Activated CD8-positive, alpha-beta T cell treated with anti-CD3 and anti-CD28 coated beads, Interleukin-2, amount 10 ng/mL, durations not matched to agents 7 days and 5 days (primary cell): ENCODE measurements at regions of chr3 and their contacts with region 1.

Region 1: GRCh38 chr3:111967651-111968274 is 11.1 kb upstream of the ABHD10 start:
- DNase-seq: peak; percentile 87
- ATAC-seq: peak; percentile 85
- H3K4me3 Mint-ChIP-seq: no peak overlapping the region
- H3K27ac Mint-ChIP-seq: no peak overlapping the region
- H3K4me1 Mint-ChIP-seq: peaks cover 4% of the 10 kb centered on the region
- H3K27me3 Mint-ChIP-seq: peaks cover 3% of the 10 kb centered on the region

Region 2: GRCh38 chr3:111691293-111691909 is 276.4 kb before region 1 on chr3:
- CTCF ChIA-PET with region 1: interaction called, 10 read pairs
- POLR2A ChIA-PET with region 1: no interaction called
- DNase-seq: no peak
- ATAC-seq: no peak
- H3K4me3 Mint-ChIP-seq: no peak overlapping the region
- H3K27ac Mint-ChIP-seq: peak overlapping the region; percentile 53
- H3K4me1 Mint-ChIP-seq: peaks cover 68% of the 10 kb centered on the region
- H3K27me3 Mint-ChIP-seq: no peaks in the 10 kb centered on the region

Region 3: GRCh38 chr3:111723293-111724215 is 244.2 kb before region 1 on chr3:
- CTCF ChIA-PET with region 1: interaction called, 234 read pairs
- POLR2A ChIA-PET with region 1: no interaction called
- DNase-seq: no peak
- ATAC-seq: no peak
- H3K4me3 Mint-ChIP-seq: no peak overlapping the region
- H3K27ac Mint-ChIP-seq: no peak overlapping the region
- H3K4me1 Mint-ChIP-seq: peaks cover 10% of the 10 kb centered on the region
- H3K27me3 Mint-ChIP-seq: no peaks in the 10 kb centered on the region

Region 4: DNA sequence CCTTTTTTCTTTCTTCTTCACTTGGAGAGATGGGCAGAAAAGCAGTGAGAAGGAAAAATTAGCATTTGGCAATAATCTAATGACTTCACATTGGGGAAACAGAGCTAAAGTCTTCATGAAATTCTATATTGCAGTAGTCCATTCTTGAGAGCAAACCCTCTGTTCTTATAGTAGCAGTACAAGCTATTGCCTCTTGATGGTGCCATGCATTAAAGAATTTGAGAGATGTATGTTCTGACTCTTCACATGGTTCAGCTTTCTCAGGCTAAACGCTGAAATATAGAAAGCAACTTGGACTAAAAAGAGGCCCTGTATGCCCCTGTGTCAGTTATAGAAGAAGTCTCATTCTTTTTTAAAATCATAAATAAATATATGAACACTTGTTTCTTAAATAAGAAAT is 72.7 kb before region 1 on chr3:
- CTCF ChIA-PET with region 1: interaction called, 12 read pairs
- POLR2A ChIA-PET with region 1: no interaction called
- DNase-seq: no peak
- ATAC-seq: no peak
- H3K4me3 Mint-ChIP-seq: no peak overlapping the region
- H3K27ac Mint-ChIP-seq: no peak overlapping the region
- H3K4me1 Mint-ChIP-seq: peaks cover 6% of the 10 kb centered on the region
- H3K27me3 Mint-ChIP-seq: no peaks in the 10 kb centered on the region

Region 5: DNA sequence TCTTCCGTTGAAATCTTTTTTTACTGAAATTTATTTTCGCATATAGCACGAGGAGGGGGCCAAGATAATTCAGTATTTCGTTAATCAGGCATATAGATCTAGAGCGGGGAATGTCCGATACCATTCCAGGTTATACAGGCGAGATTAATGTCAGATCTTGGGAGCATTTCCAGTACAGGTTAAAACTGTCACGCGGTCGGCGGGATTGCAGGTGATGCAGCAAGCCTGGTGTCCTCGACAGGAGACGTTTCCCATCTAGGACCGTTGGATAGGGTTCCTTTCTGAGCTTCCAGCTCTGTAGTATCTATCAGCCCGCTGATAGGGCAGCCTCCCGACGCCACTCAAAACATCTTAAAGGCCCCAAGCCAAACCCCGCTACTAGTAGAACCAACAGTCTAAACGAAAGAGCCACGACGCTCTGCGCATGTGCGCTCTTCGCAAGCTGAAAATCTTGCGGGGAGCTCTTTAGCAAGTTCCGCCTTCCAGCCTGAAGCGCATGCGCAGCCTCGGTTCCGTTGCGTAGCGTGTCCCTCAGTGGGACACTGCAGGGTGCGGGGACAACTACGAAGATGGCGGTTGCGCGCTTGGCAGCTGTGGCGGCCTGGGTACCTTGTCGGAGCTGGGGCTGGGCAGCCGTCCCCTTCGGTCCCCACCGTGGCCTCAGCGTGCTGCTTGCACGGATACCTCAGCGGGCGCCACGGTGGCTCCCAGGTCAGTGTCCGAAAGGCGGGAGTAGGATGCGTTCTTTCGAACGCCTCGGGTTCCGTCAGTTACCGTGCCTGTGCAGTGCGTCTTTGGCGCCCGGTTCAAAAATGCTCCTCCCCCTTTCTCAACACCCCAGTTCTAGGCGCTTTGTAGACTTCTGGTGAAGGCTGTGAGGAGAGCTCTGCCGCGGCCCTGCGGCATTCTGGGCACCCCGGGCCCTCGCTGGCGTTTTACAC is 11.0 kb after region 1 on chr3 and contains the start of gene ABHD10:
- CTCF ChIA-PET with region 1: interaction called, 49 read pairs
- POLR2A ChIA-PET with region 1: no interaction called
- DNase-seq: peak; percentile 98
- ATAC-seq: peak; percentile 98
- H3K4me3 Mint-ChIP-seq: peak within 1 kb of the TSS; percentile 91
- H3K27ac Mint-ChIP-seq: peak within 1 kb of the TSS; percentile 95
- H3K4me1 Mint-ChIP-seq: peaks cover 28% of the 10 kb centered on the region
- H3K27me3 Mint-ChIP-seq: peaks cover 6% of the 10 kb centered on the region
- total RNA-seq, gene ABHD10: 36.3 to 43.7 TPM

Region 6: DNA sequence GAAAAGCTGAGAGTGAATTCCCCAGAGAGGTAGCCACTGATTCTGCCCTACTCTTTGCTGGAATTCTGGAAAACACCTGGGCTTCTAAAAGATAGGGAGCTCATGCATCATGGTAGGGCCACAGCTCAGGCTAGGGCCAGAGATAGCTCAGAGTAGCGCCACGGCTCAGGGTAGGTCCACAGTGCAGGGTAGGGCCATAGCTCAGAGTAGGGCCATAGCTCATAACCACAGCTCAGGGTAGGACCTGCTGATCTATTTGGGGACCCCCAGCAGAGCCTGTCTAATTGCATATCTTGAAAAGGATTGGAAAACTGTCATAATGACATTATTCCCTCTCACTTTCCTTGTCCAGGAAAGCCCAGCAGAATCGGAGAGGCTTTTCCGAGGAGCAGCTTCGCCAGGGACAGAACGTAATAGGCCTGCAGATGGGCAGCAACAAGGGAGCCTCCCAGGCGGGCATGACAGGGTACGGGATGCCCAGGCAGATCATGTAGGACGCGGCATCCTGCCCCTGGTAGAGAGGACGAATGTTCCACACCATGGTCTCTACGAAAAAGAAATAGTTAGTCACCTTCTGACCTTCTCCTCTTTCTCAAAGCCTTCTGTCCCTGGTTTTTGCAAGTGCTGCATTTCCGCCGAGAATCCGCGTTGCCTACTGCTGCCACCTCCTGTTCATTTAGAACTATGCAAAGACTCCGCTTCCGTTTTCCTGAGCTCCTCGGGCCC is 45.5 kb after region 1 on chr3:
- CTCF ChIA-PET with region 1: interaction called, 40 read pairs
- POLR2A ChIA-PET with region 1: interaction called, 3 read pairs
- DNase-seq: peak; percentile 74
- ATAC-seq: peak; percentile 88
- H3K4me3 Mint-ChIP-seq: no peak overlapping the region
- H3K27ac Mint-ChIP-seq: peak overlapping the region; percentile 53
- H3K4me1 Mint-ChIP-seq: peaks cover 13% of the 10 kb centered on the region
- H3K27me3 Mint-ChIP-seq: no peaks in the 10 kb centered on the region